PC-3 (cell line): ENCODE measurements at regions of chr5 and their contacts with region 1.

Region 1: GRCh38 chr5:92371889-92372235 is 988.7 kb upstream of the ARRDC3 start:
- DNase-seq: peak; percentile 76
- ATAC-seq: peak; percentile 98
- H3K4me3 ChIP-seq: no peak overlapping the region
- H3K27ac ChIP-seq: peak overlapping the region; percentile 86
- H3K4me1 ChIP-seq: peaks cover 21% of the 10 kb centered on the region
- H3K27me3 ChIP-seq: no peaks in the 10 kb centered on the region
- CTCF ChIP-seq: no peak

Region 2: GRCh38 chr5:92002721-92003274 is 369.1 kb before region 1 on chr5:
- CTCF ChIA-PET with region 1: no interaction called
- POLR2A ChIA-PET with region 1: no interaction called
- intact Hi-C with region 1: no loop called
- DNase-seq: no peak
- ATAC-seq: no peak
- H3K4me3 ChIP-seq: no peak overlapping the region
- H3K27ac ChIP-seq: no peak overlapping the region
- H3K4me1 ChIP-seq: no peaks in the 10 kb centered on the region
- H3K27me3 ChIP-seq: peaks cover 14% of the 10 kb centered on the region; the same call in 1 of the 2 replicates
- CTCF ChIP-seq: no peak

Region 3: DNA sequence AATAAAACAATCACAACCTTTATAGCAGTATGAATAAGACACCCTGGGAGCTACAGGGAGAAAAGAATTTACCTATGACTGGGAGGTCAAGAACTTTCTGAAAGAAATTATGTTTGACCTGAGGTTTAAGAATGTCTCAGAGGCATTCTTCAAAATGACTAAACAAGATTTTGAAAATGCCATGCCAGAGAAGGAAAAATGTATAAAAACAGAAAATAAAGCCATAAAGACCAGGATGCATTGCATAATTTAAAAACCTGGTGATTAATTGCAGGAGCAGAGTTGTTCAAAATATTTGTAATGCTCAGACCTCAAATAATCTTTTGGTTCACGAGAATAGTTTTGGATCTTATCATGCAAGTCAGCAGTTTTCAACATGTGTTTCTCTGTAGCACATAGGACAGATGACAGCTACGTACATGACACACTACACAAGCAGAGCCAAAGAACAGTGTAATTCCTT is 34.1 kb before region 1 on chr5:
- CTCF ChIA-PET with region 1: no interaction called
- POLR2A ChIA-PET with region 1: no interaction called
- intact Hi-C with region 1: loop called (anchors 5 kb)
- DNase-seq: peak; percentile 59
- ATAC-seq: peak; percentile 45
- H3K4me3 ChIP-seq: no peak overlapping the region
- H3K27ac ChIP-seq: peak overlapping the region; percentile 5; the same call in 1 of the 2 replicates
- H3K4me1 ChIP-seq: peaks cover 9% of the 10 kb centered on the region
- H3K27me3 ChIP-seq: no peaks in the 10 kb centered on the region
- CTCF ChIP-seq: no peak